Esophagus squamous epithelium (tissue), 5 donors: ENCODE measurements at regions of chr1 and their contacts with region 1.

Region 1: DNA sequence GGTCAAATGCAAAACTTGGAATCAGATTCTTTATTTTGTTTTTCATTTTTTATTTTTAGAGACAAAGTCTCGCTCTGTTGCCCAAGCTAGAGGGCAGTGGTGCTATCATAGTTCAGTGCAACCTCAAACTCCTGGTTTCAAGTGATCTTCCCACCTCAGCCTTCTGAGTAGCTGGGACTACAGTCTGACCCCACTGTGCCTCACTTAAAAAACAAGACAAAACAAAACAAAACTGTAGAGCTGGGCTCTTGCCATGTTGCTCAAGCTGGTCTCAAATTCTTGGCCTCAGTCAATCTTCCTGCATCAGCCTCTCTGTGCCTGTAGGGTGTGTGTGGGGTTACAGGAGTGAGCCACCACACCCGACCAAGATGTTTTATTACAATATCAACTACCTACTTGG is 396.0 kb upstream of the USP24 start:
- DNase-seq: no peak
- H3K4me3 ChIP-seq: no peak overlapping the region
- H3K27ac ChIP-seq: no peak overlapping the region
- H3K4me1 ChIP-seq: no peaks in the 10 kb centered on the region
- H3K27me3 ChIP-seq: no peaks in the 10 kb centered on the region
- CTCF ChIP-seq: peak in 1 of 6 experiments; percentile 12
- POLR2A ChIP-seq: no peak

Region 2: GRCh38 chr1:55813618-55814017 is 202.5 kb after region 1 on chr1:
- intact Hi-C with region 1: loop called (anchors 10 kb)
- DNase-seq: no peak
- H3K4me3 ChIP-seq: no peak overlapping the region
- H3K27ac ChIP-seq: no peak overlapping the region
- H3K4me1 ChIP-seq: no peaks in the 10 kb centered on the region
- H3K27me3 ChIP-seq: no peaks in the 10 kb centered on the region
- CTCF ChIP-seq: no peak
- POLR2A ChIP-seq: no peak

Region 3: GRCh38 chr1:55848906-55849305 is 237.8 kb after region 1 on chr1:
- intact Hi-C with region 1: no loop called
- DNase-seq: no peak
- H3K4me3 ChIP-seq: no peak overlapping the region
- H3K27ac ChIP-seq: no peak overlapping the region
- H3K4me1 ChIP-seq: no peaks in the 10 kb centered on the region
- H3K27me3 ChIP-seq: no peaks in the 10 kb centered on the region
- CTCF ChIP-seq: peak in 1 of 6 experiments; percentile 18
- POLR2A ChIP-seq: no peak